ENCODE measurements at regions of chr1 and their contacts with region 1.

Region 1: DNA sequence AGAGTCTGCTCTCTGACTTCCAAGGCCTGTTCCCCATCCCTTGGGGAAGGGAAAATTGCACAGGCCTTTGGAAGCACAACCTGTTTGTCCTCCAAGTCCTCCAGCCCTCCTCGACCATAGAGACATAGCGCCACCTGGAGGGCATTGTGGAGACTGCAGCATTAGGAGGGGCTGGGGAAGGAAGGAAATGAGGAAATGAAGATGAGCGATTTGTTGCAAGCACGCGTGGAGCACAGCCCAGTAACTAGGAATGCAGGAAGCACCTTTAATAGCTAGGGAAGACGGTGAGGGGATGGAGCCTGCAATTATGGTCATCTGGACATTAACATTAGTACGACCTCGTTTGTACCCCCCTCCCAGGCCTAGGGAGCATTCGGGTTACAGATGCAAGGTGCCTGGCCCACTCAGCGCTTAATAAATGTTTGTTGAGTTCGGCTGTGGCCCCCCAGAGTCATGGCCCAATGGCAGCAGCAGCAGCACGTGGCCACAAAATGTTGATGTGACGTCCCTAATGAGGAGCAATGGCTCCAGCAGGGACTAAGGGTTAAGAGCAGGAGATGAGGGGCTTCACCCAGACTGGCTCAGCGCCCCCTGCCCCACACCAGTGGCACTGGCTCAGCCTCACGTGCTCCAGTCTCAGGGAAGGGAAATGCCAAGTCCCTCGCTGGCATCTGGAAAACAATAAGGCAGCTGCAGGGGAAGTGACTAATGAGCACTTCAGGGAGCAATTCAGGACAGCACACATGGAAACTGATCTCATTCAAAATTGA is 8.0 kb upstream of the CAMK2N1 start:
- DNase-seq: peak; percentile 90 to 96 (median 93)
- H3K4me3 ChIP-seq: no peak overlapping the region
- H3K27ac ChIP-seq: no peak overlapping the region
- H3K4me1 ChIP-seq: peaks cover 0 to 5% (median 0%) of the 10 kb centered on the region in 3 donors
- H3K27me3 ChIP-seq: no peaks in the 10 kb centered on the region
- CTCF ChIP-seq: peak; percentile 100

Region 2: GRCh38 chr1:20376880-20377494 is 117.0 kb before region 1 on chr1:
- intact Hi-C with region 1: loop called (anchors 10 kb)
- DNase-seq: peak in 4 of 5 donors; percentile 52 to 64 (median 62)
- H3K4me3 ChIP-seq: no peak overlapping the region
- H3K27ac ChIP-seq: no peak overlapping the region
- H3K4me1 ChIP-seq: no peaks in the 10 kb centered on the region
- H3K27me3 ChIP-seq: peaks cover 3% of the 10 kb centered on the region
- CTCF ChIP-seq: peak; percentile 74

Region 3: GRCh38 chr1:20633190-20634064 is 139.4 kb after region 1 on chr1 and contains the start of gene PINK1:
- intact Hi-C with region 1: no loop called
- DNase-seq: peak; percentile 91 to 93 (median 92)
- H3K4me3 ChIP-seq: peak within 1 kb of the TSS; percentile 69 to 85 (median 72)
- H3K27ac ChIP-seq: peak within 1 kb of the TSS; percentile 85
- H3K4me1 ChIP-seq: peaks cover 0 to 9% (median 6%) of the 10 kb centered on the region in 3 donors
- H3K27me3 ChIP-seq: no peaks in the 10 kb centered on the region
- CTCF ChIP-seq: peak; percentile 98
- total RNA-seq, gene PINK1: 72.7 TPM

Region 4: DNA sequence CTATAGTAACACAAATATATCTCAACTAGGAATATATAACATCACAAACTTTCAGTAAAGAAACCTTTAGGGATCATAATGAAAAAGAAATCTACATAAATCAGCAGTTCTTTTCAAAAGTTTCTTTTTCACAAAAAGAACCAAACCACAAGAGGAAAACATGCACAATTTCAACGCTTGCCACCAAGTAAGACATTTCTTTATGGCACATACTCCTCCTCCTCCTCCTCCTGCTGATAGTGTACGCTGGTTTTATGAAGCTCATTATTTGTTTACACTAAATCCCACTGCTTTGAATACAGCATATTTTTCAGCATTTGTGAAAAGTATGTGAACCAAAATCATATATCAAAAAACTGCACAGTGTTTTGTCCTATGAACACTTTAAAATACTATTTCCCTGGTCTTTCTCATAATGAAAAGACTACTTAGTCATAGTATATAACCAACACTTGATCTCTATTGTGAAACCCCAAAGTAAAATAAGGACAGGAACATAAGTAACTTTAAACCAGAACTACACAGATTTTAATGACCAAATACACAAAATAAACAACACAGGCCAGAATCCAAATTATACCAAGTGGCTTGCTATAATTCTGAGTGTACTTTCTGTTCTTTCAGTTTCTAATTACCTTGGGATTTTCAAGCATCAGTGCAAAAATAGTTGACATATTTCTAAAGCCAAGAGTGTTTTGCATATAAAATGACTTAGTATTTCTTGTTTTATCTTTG is 498.5 kb after region 1 on chr1:
- intact Hi-C with region 1: no loop called
- DNase-seq: no peak
- H3K4me3 ChIP-seq: no peak overlapping the region
- H3K27ac ChIP-seq: no peak overlapping the region
- H3K4me1 ChIP-seq: peaks cover 0 to 5% (median 0%) of the 10 kb centered on the region in 3 donors
- H3K27me3 ChIP-seq: no peaks in the 10 kb centered on the region
- CTCF ChIP-seq: no peak